Mammary epithelial cell (primary cell): ENCODE measurements at regions of chr9 and their contacts with region 1.

Region 1: DNA sequence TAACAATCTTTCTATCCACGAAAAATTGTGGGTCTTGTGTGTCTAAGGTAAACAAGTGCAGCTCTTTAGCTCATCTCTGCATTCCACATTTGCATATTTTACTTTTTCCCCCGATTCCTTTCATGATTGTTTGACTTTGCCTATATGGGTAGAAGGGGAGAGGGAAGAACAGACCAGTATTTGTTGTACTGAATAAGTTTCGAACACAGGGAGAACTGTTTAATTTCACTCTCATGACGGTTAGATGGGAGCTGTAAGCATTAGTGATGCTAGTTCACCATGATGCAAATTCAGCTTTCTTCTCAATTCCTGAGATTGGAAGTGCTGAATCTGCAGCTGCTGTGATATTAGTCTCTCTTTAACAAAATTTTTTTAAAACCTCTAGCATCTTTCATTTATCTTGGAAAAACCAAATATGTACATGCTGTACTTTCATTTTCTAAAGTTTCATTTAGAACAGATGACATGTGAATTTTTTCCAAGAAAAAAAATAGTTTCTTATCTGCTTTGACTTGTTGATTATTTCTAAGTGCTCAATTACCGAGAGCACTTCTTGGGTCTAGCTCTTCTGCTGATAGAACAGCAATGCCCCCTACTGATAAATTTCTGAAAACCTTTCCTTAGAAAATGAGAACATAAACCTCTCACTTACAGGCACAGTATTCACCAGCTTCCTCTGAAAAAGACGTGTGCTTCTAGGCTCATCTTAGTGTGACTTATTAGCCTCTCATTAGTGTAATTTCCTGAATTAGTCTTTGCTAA is 149.5 kb downstream of the BAAT start:
- DNase-seq: peak; percentile 19
- H3K4me3 ChIP-seq: no peak overlapping the region
- H3K27ac ChIP-seq: no peak overlapping the region
- H3K4me1 ChIP-seq: no peaks in the 10 kb centered on the region
- H3K27me3 ChIP-seq: no peaks in the 10 kb centered on the region
- CTCF ChIP-seq: peak; percentile 37 to 65

Region 2: DNA sequence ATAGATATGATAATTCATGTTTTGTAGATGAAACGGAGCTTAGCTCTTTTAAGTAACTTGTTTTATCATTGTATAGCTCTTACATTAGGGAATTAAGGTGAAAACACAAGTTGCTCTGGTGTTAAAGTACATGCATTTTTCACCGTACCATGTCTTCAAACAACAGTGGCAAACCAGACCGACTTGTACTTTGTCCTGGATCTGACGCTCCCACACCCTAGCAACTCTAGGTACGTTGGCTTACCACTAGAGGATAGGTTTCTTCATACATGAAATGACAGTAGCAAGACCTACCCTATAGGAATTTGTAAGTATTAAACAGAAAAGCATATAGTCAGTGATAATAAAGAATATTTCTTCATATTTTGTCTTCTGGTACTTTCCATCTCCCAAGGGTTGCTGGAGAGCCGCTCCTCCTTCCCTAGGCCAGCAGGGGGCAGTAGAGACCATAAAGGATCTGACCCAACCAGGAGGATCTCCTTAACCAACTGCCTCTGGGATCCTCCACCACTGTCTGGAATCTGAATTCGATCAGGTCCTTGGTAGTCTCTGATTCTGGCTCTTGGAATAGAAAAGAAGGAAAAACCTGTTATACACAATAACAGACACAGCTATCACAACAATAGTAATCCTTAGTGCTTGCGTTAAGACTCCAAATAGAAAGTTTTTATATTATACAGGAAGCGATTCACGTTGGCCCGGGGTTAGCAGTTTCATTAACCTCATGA is 520.8 kb before region 1 on chr9:
- CTCF ChIA-PET with region 1: no interaction called
- dilution Hi-C with region 1: no loop called
- in situ Hi-C with region 1: loop called in 1 of 2 experiments (anchors 25 kb)
- intact Hi-C with region 1: loop called (anchors 1 kb)
- DNase-seq: peak; percentile 37
- H3K4me3 ChIP-seq: no peak overlapping the region
- H3K27ac ChIP-seq: no peak overlapping the region
- H3K4me1 ChIP-seq: no peaks in the 10 kb centered on the region
- H3K27me3 ChIP-seq: no peaks in the 10 kb centered on the region
- CTCF ChIP-seq: peak; percentile 87 to 95

Region 3: GRCh38 chr9:101311758-101312420 is 76.6 kb after region 1 on chr9:
- CTCF ChIA-PET with region 1: no interaction called
- dilution Hi-C with region 1: no loop called
- in situ Hi-C with region 1: no loop called
- intact Hi-C with region 1: loop called (anchors 2 kb)
- DNase-seq: peak; percentile 58
- H3K4me3 ChIP-seq: no peak overlapping the region
- H3K27ac ChIP-seq: no peak overlapping the region
- H3K4me1 ChIP-seq: peaks cover 15% of the 10 kb centered on the region
- H3K27me3 ChIP-seq: no peaks in the 10 kb centered on the region
- CTCF ChIP-seq: peak; percentile 48 to 59